ENCODE measurements at regions of chr1 and their contacts with region 1.

Region 1: DNA sequence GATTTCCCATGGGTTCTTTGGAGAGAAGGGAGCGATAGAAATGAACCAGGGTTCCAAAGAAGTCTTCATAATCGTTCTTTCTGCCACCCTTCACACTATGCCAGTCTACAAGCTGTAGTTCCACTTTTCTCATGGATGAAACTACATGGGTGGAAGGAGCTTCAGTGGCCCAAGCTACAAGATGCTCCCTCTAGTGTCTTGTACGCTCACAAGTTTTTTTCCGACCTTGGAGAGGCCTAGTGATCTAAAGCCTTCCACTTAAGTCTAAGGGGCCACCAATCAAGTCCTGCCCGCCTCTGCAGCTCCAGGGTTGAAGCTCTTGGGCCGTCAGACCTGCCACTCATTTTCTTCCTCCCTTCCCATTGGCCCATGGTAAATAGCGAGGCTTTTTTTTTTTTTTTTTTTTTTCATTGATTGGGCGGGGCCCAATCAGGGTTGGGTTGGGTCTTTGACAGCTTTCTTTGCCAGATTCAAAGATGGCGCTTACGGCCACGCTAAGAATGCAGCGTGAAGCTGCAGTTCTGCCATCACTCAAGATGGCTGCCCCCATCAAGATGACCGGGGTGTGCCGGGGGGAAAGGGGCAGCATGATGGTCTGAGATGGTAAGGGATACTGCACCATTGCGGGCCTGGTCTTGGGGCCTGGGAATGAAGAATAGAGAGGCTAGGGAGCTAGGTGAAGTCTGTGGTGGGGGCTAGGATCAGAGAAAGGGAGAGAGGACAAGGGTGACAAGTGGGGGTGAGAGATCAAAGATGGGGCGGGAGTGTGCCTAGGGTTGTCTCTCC is at the start of gene TOMM40L:
- DNase-seq: peak; percentile 87
- H3K4me3 Mint-ChIP-seq: peak within 1 kb of the TSS; percentile 99
- H3K27ac Mint-ChIP-seq: peak within 1 kb of the TSS; percentile 100
- H3K4me1 Mint-ChIP-seq: peaks cover 24% of the 10 kb centered on the region
- H3K27me3 Mint-ChIP-seq: peaks cover 3% of the 10 kb centered on the region
- total RNA-seq, gene TOMM40L: 25.3 and 28.0 TPM in 2 replicates

Region 2: DNA sequence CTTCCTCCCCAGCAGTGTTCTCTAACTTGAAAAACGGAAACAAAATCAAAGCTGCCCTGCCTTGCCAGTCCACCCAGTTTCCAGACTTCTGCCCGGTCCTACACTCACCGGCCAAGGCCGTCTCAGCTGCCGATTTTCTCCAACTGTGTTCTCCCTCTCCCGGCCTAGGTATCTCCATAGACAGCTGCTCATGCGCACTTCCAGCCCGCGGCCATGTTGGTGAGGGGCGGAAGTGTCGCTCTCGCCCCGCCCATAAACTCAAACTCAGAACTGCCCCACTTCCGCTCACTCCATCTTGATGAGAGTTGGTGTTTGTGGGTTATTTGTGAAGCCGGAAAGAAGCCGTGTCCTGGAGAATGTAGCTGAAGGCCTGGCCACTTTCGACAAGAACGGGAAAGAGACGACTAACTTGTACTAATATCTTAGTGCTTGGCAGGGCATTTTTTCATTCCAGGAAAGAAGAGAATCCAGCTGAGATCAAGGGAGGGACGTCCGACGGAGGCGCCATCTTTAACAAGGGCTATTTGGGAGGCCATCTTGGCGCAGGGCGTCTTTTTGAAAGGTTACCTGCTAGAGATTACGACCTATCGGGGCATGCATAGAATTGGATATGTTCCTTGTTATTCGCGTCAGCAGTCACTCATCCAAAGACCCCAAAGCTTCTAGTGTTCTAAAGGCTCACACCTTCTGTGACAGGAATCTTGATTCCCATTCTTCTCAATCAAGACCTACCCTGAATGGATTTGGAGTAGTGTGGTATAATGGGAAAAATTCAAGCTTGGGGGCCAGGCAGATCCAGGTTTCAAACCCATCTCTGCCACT is 179.8 kb before region 1 on chr1 and contains the start of gene USF1:
- intact Hi-C with region 1: loop called (anchors 1 kb)
- DNase-seq: peak; percentile 92
- H3K4me3 Mint-ChIP-seq: peak within 1 kb of the TSS; percentile 94
- H3K27ac Mint-ChIP-seq: peak within 1 kb of the TSS; percentile 97
- H3K4me1 Mint-ChIP-seq: peaks cover 55% of the 10 kb centered on the region
- H3K27me3 Mint-ChIP-seq: no peaks in the 10 kb centered on the region
- total RNA-seq, gene USF1: 50.6 and 51.5 TPM in 2 replicates

Region 3: DNA sequence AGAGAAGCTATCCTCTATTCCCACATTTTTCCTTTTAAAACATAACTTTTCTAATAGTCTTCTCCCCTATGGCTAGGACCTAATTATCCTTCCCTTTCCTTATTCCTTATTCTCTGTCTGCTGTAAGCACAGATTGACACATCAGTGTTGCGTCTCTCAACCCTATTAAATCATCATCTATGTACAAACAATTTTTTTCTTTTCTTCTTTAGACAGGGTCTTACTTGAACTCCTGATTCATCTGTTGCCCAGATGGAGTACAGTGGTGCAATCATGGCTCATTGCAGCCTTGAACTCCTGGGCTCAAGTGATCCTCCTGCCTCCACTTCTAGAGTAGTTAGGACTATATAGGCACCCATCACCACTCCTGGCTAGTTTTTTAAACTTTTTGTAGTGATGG is 119.3 kb before region 1 on chr1:
- intact Hi-C with region 1: no loop called
- DNase-seq: no peak
- H3K4me3 Mint-ChIP-seq: no peak overlapping the region
- H3K27ac Mint-ChIP-seq: no peak overlapping the region
- H3K4me1 Mint-ChIP-seq: peaks cover 12% of the 10 kb centered on the region
- H3K27me3 Mint-ChIP-seq: no peaks in the 10 kb centered on the region

Region 4: GRCh38 chr1:161165742-161166668 is 59.7 kb before region 1 on chr1 and contains the start of gene PPOX:
- intact Hi-C with region 1: loop called (anchors 1 kb)
- DNase-seq: peak; percentile 95
- H3K4me3 Mint-ChIP-seq: peak within 1 kb of the TSS; percentile 87
- H3K27ac Mint-ChIP-seq: peak within 1 kb of the TSS; percentile 99
- H3K4me1 Mint-ChIP-seq: peaks cover 61% of the 10 kb centered on the region
- H3K27me3 Mint-ChIP-seq: no peaks in the 10 kb centered on the region
- total RNA-seq, gene PPOX: 25.1 and 26.0 TPM in 2 replicates

Region 5: DNA sequence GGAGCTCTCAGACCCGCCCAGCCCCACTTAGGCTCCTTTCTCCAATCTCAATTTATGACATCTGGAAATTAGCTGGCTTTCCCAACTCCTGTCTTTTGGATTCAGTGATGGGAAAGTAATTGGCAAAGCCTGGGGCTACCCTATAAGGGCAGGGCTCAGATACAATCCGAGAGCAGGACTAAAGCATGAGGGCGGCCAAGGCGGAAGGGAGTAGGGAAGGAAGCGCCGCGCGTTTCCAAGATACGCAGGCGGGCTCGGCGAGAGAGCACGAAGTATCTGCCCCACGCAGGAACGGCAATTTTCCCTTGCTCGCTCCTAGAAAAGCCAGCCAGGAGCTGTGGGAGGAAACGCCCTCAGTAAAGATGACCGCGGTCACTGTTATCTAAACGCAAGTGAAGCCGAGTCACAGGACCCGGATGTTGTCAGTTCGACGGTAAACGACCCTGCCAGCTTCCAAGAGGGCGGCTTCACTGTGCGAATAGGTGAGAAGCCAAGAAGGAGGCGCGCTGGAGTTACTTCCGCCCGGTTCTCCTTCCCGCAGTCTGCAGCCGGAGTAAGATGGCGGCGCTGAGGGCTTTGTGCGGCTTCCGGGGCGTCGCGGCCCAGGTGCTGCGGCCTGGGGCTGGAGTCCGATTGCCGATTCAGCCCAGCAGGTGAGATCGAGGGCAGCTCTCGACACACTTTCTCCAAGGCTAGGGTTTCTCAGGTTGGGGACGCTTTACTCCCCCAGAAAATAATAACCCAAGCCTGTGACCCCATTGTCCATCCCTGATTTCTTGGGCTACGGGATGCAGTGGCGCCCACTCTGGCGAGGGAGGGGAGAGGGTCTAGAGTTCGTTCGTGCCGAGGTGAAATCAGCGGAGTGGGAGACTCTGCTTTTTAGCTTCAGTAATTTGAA is 23.6 kb before region 1 on chr1 and contains the start of gene NDUFS2:
- intact Hi-C with region 1: loop called (anchors 1 kb)
- DNase-seq: peak; percentile 93
- H3K4me3 Mint-ChIP-seq: peak within 1 kb of the TSS; percentile 96
- H3K27ac Mint-ChIP-seq: peak within 1 kb of the TSS; percentile 97
- H3K4me1 Mint-ChIP-seq: peaks cover 77% of the 10 kb centered on the region
- H3K27me3 Mint-ChIP-seq: no peaks in the 10 kb centered on the region
- total RNA-seq, gene NDUFS2: 72.9 and 84.1 TPM in 2 replicates

Region 6: GRCh38 chr1:161305867-161306519 is 80.3 kb after region 1 on chr1:
- intact Hi-C with region 1: loop called (anchors 1 kb)
- DNase-seq: peak; percentile 82
- H3K4me3 Mint-ChIP-seq: peak overlapping the region; percentile 99
- H3K27ac Mint-ChIP-seq: peak overlapping the region; percentile 94
- H3K4me1 Mint-ChIP-seq: peaks cover 52% of the 10 kb centered on the region
- H3K27me3 Mint-ChIP-seq: no peaks in the 10 kb centered on the region

Region 7: GRCh38 chr1:161382214-161383019 is 156.7 kb after region 1 on chr1:
- intact Hi-C with region 1: loop called (anchors 1 kb)
- DNase-seq: no peak
- H3K4me3 Mint-ChIP-seq: no peak overlapping the region
- H3K27ac Mint-ChIP-seq: no peak overlapping the region
- H3K4me1 Mint-ChIP-seq: peaks cover 18% of the 10 kb centered on the region
- H3K27me3 Mint-ChIP-seq: peaks cover 2% of the 10 kb centered on the region